Activated CD4-positive, alpha-beta memory T cell treated with anti-CD3 and anti-CD28 coated beads, Interleukin-2, amount 10 ng/mL, durations not matched to agents 7 days and 5 days (primary cell): ENCODE measurements at regions of chr2 and their contacts with region 1.

Region 1: DNA sequence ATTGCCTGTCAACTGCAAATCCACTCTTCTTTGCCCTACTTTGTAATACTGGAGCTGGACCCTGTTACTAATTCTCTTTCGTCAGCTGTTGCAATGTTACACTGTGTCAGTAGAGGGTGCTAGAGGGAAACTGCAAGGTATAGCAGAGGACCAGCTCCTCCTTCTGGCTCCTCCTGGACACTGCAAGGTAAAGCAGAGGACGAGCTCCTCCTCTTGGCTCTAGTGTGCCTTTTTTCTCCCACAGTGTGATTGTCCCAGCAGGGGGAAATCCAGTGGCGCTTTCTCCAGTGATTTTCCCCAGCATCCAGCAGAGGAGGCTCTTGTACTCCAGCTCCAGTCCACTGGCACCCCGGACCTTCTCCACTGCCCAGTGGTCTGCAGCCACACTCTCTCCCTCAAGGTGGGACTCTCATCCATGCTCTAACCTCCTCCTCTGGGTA is 95.6 kb downstream of the CAPN13 start:
- DNase-seq: peak; percentile 86
- H3K4me3 Mint-ChIP-seq: no peak overlapping the region
- H3K27ac Mint-ChIP-seq: no peak overlapping the region
- H3K4me1 Mint-ChIP-seq: peaks cover 15% of the 10 kb centered on the region
- H3K27me3 Mint-ChIP-seq: no peaks in the 10 kb centered on the region

Region 2: DNA sequence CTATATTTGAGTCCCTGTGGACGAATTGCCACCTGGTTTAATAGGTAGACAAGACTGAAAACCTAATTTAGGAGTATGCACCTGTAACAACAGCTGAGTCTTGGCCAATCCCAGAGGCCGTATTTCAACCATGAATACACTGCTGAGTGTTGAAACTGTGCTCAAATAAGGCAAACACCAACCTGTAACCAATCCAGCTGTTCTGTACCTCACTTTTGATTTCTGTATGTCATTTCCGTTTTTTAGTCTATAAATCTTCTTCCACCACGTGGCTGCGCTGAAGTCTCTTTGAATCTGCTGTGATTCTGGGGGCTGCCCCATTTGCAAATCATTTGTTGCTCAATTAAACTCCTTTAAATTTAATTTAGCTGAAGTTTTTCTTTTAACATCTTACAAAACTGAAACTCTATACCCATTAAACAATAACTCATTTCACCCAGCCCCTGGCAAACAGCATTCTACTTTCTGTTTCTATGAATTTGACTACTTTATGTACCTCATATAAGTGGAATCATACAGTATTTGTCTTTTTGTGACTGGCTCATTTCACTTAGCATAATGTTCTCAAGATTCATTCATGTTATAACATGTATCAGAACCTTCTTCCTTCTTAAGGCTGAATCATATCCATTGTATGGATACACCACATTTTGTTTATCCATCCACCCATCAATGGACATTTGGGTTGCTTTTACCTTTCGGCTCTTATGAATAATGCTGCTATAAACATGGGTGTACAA is 572.4 kb before region 1 on chr2:
- CTCF ChIA-PET with region 1: interaction called, 10 read pairs
- POLR2A ChIA-PET with region 1: no interaction called
- DNase-seq: no peak
- H3K4me3 Mint-ChIP-seq: no peak overlapping the region
- H3K27ac Mint-ChIP-seq: no peak overlapping the region
- H3K4me1 Mint-ChIP-seq: peaks cover 9% of the 10 kb centered on the region
- H3K27me3 Mint-ChIP-seq: peaks cover 6% of the 10 kb centered on the region

Region 3: GRCh38 chr2:30165050-30165520 is 546.6 kb before region 1 on chr2:
- CTCF ChIA-PET with region 1: interaction called, 416 read pairs
- POLR2A ChIA-PET with region 1: interaction called, 11 read pairs
- DNase-seq: peak; percentile 69
- H3K4me3 Mint-ChIP-seq: no peak overlapping the region
- H3K27ac Mint-ChIP-seq: no peak overlapping the region
- H3K4me1 Mint-ChIP-seq: peaks cover 3% of the 10 kb centered on the region
- H3K27me3 Mint-ChIP-seq: no peaks in the 10 kb centered on the region

Region 4: DNA sequence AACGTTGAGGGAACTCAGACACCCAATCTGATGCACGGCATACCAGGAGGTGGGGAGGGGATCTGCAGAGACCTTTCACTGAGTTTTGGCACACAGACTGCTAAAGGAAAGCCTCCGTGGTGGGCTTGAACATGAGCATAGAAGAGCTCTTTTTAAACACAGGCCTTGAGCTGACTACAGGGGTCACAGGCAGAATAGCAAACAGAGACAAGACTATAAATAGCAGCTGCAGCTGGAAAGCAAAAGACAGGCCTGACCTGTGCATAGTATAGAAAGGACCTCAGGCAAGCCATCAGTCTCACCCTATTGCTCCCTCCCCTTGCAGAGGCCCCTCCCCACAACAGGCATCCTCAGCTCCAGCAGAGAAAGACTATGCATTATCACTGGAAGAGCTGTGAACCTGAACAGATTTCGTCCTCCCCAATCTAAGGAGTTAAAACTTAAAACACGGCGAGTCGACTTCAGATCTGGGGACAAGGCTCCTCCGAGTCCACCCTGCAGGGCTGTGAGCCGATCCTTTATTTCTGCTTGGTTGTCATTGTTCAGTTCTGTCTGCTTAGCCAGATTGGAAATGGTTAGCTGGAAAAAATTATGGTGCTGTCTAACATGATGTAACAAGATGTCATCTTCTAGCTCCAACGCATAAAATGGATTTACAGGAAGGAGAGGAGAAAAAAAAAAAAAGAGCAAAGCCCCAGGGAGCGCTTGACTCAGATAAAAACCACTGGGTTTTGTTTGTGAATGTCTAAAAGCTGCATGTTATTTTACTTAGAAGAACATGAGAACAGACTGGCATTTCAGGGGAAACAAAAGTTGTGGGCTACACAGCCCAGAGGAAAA is 289.8 kb before region 1 on chr2:
- CTCF ChIA-PET with region 1: interaction called, 17 read pairs
- POLR2A ChIA-PET with region 1: no interaction called
- DNase-seq: peak; percentile 21
- H3K4me3 Mint-ChIP-seq: peak overlapping the region; percentile 39
- H3K27ac Mint-ChIP-seq: peak overlapping the region; percentile 85
- H3K4me1 Mint-ChIP-seq: peaks cover 32% of the 10 kb centered on the region
- H3K27me3 Mint-ChIP-seq: no peaks in the 10 kb centered on the region

Region 5: DNA sequence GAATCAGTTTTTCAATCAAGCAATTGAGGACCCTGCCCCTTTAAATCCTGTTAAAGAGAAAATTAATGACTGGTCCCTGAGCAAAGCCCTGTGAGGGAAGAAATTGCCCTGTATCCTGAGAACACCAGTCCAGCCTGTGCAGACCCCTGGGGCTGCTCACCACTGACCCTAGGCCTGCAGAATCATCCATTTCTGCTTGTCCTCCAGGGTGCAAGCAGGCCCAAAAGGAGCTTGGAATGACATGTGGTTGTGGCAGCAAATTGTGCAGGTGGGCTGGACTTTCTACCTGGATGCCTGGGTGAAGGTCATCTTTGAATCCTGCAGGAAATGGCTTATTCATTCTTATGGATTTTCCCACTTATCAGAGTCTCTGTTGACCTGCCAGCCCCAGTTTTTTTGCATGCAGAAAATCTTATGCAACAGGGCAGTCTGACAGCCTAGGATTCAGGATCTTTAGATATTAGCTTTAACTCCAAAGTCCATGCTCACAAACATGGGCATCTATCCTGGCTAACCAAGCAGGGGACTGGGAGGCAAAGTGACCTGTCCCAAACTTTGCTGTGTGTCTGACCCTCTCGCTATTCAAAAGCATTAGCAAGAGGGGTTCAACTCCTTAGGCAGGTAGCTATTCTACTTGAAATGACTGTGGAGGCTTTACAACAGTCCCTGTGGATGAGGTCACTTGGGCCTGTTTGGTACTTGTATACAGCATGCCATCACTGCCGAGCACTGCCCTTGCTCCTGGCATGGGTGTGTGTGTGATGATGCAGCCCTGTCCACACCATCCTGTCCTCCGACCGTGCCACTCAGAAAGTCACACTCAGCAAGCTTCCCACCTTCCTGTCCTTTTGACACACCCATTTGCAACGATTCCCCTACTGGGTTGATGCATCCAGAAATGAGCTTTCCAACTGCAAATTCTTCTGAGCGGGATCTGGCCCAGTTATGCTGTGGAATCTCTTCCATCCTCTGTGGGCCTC is 10.3 kb after region 1 on chr2:
- CTCF ChIA-PET with region 1: interaction called, 17 read pairs
- POLR2A ChIA-PET with region 1: no interaction called
- DNase-seq: no peak
- H3K4me3 Mint-ChIP-seq: no peak overlapping the region
- H3K27ac Mint-ChIP-seq: no peak overlapping the region
- H3K4me1 Mint-ChIP-seq: no peaks in the 10 kb centered on the region
- H3K27me3 Mint-ChIP-seq: peaks cover 40% of the 10 kb centered on the region

Region 6: DNA sequence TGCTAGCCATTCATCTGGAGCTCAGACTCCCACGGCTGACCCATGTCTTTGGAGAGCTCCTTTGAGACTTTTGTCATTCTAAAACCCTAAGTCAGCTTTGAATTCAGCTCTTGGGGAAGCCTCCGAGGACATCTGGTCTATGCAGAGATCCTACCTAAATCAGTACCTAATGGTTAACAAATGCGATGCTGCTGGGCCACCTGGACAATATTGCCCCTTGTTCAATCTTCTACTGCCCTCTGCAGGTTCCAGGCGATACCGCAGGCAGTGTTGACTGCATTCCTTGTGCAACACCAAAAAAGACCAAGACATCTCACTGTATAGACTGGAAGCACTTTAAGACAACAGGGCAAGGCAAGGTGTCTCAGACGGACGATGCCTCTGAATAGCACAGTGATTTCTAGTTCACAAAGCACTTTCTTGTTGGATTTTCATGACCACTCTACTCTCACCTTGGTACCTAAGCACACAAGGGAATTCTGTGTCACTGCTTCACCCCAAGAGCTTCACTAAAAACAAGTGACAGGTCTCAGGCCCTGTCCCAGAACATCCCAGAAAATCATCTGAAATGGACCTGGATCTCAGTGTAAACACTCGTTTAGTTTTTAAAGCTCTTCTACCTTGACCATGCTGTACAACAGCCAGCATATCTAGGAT is 622.0 kb after region 1 on chr2:
- CTCF ChIA-PET with region 1: interaction called, 86 read pairs
- POLR2A ChIA-PET with region 1: no interaction called
- DNase-seq: peak; percentile 83
- H3K4me3 Mint-ChIP-seq: no peak overlapping the region
- H3K27ac Mint-ChIP-seq: no peak overlapping the region
- H3K4me1 Mint-ChIP-seq: no peaks in the 10 kb centered on the region
- H3K27me3 Mint-ChIP-seq: peaks cover 21% of the 10 kb centered on the region